Heart left ventricle (tissue), 16 donors: ENCODE measurements at regions of chr6 and their contacts with region 1.

Region 1: GRCh38 chr6:157274471-157275226 is 48.7 kb downstream of the TMEM242 start:
- DNase-seq: peak; percentile 77 to 91 (median 82)
- ATAC-seq: peak; percentile 74 to 98 (median 94)
- H3K4me3 ChIP-seq: peak overlapping the region; percentile 28 to 80 (median 64)
- H3K27ac ChIP-seq: peak overlapping the region; percentile 51 to 90 (median 81)
- H3K4me1 ChIP-seq: peaks cover 0 to 28% (median 15%) of the 10 kb centered on the region in 12 donors
- H3K27me3 ChIP-seq: no peaks in the 10 kb centered on the region
- CTCF ChIP-seq: peak; percentile 27 to 98 (median 88)
- POLR2A ChIP-seq: peak in 1 of 2 donors; percentile 40

Region 2: GRCh38 chr6:157021344-157021992 is 253.2 kb before region 1 on chr6:
- intact Hi-C with region 1: loop called in 2 of 10 experiments (anchors 5 to 10 kb)
- DNase-seq: peak; percentile 93 to 96 (median 93)
- ATAC-seq: peak; percentile 89 to 95 (median 94)
- H3K4me3 ChIP-seq: peak overlapping the region; percentile 53 to 96 (median 82)
- H3K27ac ChIP-seq: peak overlapping the region; percentile 95 to 100 (median 99)
- H3K4me1 ChIP-seq: peaks cover 0 to 55% (median 32%) of the 10 kb centered on the region in 12 donors
- H3K27me3 ChIP-seq: no peaks in the 10 kb centered on the region
- CTCF ChIP-seq: peak; percentile 11 to 72 (median 48)
- POLR2A ChIP-seq: peak in 1 of 2 donors; percentile 95

Region 3: DNA sequence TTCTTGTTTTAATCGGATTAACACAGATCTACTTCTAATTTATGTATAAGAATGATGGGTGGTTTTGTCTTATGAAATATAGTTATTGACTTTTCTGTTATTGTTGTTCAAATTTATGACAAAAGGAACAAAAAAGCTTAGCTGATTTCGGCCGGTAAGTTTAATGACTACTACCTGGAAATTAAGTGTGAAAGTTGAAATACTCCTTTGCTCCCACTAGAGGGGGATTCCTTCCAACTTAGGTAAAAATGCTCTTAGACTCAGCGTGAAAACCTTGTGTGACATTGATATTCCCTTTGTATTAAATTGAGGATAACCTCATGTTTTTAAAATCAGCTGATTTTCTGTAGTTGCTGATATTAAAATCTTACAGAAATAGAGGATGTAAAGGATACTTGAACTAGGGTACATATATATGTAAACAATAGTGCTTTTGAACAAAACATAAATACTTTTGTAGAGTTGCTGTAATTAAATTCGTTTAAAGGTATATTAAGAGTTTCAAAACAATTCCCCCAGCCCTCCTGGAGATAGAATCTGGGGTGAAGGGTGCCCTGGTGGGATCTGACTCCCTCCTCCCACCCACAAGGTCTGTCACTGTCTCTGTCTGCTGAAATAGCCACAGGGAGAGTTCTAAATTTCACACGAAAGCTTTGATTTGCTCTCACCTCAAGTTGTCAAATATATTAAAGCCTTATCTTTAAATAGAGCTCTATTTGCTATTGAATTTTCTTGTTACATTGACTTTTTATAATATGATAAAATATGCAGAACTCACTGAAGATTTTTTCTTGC is 240.0 kb before region 1 on chr6:
- intact Hi-C with region 1: loop called in 4 of 10 experiments (anchors 10 kb)
- DNase-seq: no peak
- ATAC-seq: peak in 3 of 4 donors; percentile 47 to 68 (median 66)
- H3K4me3 ChIP-seq: no peak overlapping the region
- H3K27ac ChIP-seq: no peak overlapping the region
- H3K4me1 ChIP-seq: peaks cover 0 to 54% (median 39%) of the 10 kb centered on the region in 12 donors
- H3K27me3 ChIP-seq: no peaks in the 10 kb centered on the region
- CTCF ChIP-seq: peak; percentile 45 to 75 (median 58)
- POLR2A ChIP-seq: no peak

Region 4: GRCh38 chr6:157198419-157199279 is 76.0 kb before region 1 on chr6:
- intact Hi-C with region 1: loop called in 1 of 10 experiments (anchors 2 kb)
- DNase-seq: peak in 4 of 5 donors; percentile 72 to 86 (median 77)
- ATAC-seq: peak; percentile 76 to 94 (median 92)
- H3K4me3 ChIP-seq: peak overlapping the region in 4 of 12 donors; percentile 5 to 33 (median 10)
- H3K27ac ChIP-seq: peak overlapping the region in 10 of 12 donors; percentile 3 to 78 (median 54)
- H3K4me1 ChIP-seq: peaks cover 0 to 16% (median 8%) of the 10 kb centered on the region in 12 donors
- H3K27me3 ChIP-seq: no peaks in the 10 kb centered on the region
- CTCF ChIP-seq: no peak
- POLR2A ChIP-seq: no peak

Region 5: GRCh38 chr6:157227202-157228166 is 47.2 kb before region 1 on chr6:
- intact Hi-C with region 1: loop called in 6 of 10 experiments (anchors 2 to 5 kb)
- DNase-seq: peak in 1 of 5 donors; percentile 25
- ATAC-seq: peak in 1 of 4 donors; percentile 4
- H3K4me3 ChIP-seq: no peak overlapping the region
- H3K27ac ChIP-seq: peak overlapping the region in 2 of 12 donors; percentile 55 to 75
- H3K4me1 ChIP-seq: peaks cover 4 to 31% (median 17%) of the 10 kb centered on the region in 12 donors
- H3K27me3 ChIP-seq: no peaks in the 10 kb centered on the region
- CTCF ChIP-seq: peak; percentile 13 to 41 (median 26)
- POLR2A ChIP-seq: no peak

Region 6: GRCh38 chr6:157235600-157236039 is 39.0 kb before region 1 on chr6:
- intact Hi-C with region 1: loop called in 7 of 10 experiments (anchors 2 to 5 kb)
- DNase-seq: peak in 4 of 5 donors; percentile 61 to 71 (median 62)
- ATAC-seq: peak; percentile 51 to 87 (median 74)
- H3K4me3 ChIP-seq: peak overlapping the region; percentile 13 to 64 (median 58)
- H3K27ac ChIP-seq: peak overlapping the region in 8 of 12 donors; percentile 37 to 79 (median 62)
- H3K4me1 ChIP-seq: peaks cover 0 to 34% (median 20%) of the 10 kb centered on the region in 12 donors
- H3K27me3 ChIP-seq: peaks cover 0 to 26% (median 0%) of the 10 kb centered on the region in 9 donors
- CTCF ChIP-seq: peak; percentile 50 to 85 (median 63)
- POLR2A ChIP-seq: no peak

Region 7: GRCh38 chr6:157405986-157406385 is 131.3 kb after region 1 on chr6:
- intact Hi-C with region 1: no loop called
- DNase-seq: no peak
- ATAC-seq: peak in 2 of 4 donors; percentile 54 to 76
- H3K4me3 ChIP-seq: no peak overlapping the region
- H3K27ac ChIP-seq: no peak overlapping the region
- H3K4me1 ChIP-seq: peaks cover 0 to 15% (median 3%) of the 10 kb centered on the region in 12 donors
- H3K27me3 ChIP-seq: no peaks in the 10 kb centered on the region
- CTCF ChIP-seq: no peak
- POLR2A ChIP-seq: no peak